ENCODE measurements at regions of chr6 and their contacts with region 1.

Region 1: DNA sequence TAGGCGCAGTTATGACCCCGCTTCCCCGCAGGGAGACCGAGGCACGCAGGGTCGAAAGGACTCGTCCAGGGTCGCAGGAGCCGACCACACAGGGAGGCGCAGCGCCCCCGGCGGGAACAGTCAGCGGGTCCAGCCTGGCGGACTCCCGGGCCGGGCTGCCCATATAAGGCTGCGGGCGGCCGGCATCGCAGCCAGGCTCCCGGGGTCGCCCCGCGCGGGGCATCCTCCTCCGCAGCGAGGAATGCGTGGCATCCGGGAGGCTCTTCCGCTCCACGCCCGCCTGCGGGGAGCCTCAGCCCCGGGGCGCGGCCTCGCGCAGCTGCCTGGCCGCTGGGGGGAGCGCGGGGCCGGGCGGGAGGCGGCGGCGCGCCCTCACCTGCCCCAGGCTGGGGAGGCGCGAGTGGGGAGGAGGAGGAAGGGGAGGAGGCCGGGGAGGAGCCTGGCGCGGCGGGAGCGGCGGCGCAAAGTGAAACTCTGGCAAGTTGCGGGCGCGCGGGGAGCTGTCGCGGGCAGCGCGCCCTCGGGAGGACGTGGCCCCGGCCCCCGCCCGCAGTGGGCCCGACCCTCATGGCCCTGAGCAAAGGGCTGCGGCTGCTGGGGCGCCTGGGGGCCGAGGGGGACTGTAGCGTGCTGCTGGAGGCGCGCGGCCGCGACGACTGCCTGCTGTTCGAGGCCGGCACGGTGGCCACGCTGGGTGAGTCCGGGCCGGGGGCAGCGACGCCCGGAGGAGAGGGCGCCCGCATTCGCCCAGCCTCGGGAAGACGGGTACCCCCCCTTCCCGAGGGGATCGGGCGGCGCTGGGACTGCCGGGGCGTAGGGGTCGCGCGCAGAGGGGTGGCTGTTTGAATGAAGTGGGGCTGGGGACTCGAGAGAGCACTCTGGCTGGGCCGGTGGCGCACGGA is at the start of gene SYNJ2:
- DNase-seq: peak; percentile 83
- H3K4me3 Mint-ChIP-seq: peak within 1 kb of the TSS; percentile 88
- H3K27ac Mint-ChIP-seq: peak within 1 kb of the TSS; percentile 80
- H3K4me1 Mint-ChIP-seq: peaks cover 44% of the 10 kb centered on the region
- H3K27me3 Mint-ChIP-seq: peaks cover 10% of the 10 kb centered on the region
- total RNA-seq, gene SYNJ2: 21.5 and 23.6 TPM in 2 replicates

Region 2: DNA sequence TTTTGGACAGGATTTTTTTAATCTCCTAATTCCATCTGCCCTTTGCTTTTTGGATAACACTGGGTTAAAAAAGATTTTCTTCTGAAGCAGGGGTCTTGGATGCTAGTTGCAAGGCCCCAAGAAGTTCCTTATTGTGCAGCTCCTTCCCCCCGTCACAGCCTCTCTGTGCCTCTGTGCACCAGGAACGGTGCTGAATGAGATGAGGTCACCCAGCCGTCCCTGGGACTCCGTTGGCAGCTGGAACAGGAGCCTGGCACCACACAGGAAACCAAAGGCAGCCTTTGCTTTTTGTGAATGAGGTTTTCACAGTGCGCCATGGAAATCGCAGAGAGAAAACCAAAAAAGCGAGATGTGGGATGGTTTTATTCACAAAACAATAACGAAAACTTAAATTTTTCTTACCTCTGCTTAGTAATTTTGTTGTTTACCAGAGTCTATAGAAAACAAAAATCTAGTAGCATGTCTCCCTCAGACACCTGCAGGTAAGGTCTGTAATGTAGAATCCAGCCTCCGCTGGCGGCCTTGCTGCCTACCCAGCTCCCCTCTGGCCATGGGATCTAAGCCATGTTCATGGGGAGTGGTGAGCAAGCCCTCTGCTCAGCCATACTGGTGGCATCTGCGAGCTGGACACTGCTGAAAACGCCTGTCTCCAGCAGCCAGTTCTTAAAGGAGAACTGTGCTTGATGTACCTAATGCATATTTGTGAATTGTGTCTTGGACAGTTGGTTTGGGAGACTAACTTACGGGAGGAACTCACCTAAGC is 40.4 kb before region 1 on chr6:
- intact Hi-C with region 1: no loop called
- DNase-seq: no peak
- H3K4me3 Mint-ChIP-seq: no peak overlapping the region
- H3K27ac Mint-ChIP-seq: no peak overlapping the region
- H3K4me1 Mint-ChIP-seq: peaks cover 38% of the 10 kb centered on the region
- H3K27me3 Mint-ChIP-seq: no peaks in the 10 kb centered on the region

Region 3: DNA sequence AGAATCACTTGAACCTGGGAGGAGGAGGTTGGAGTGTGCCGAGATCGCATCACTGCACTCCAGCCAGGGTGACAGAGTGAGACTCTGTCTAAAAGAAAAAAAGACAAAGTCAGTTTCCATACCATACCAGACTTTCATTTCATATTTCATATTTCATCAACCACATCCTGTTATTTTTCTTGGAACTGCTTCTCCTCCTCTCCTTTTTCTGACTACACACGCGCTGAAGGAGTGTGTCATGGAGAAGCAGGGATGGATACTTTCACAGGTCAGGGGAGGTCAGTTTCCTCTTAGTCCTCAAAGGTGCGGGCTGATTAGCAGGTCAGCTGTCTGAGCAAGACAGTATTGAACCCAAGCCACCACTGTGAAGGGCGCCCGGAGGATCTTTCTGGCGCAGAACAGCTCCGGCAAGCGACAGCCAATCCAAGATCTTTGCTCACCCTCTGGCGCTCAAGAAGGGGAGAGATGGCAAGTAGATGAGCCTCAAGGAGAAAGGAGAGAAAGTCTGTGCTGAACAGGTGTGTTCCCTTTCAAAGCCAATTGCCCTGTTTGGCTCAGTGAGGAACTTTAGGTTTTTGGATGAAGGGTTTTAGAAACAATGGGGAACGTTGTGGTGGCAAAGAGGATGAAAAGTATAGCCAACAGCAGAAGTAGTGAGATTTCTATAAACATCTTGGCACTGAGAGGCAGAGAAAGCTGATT is 18.9 kb before region 1 on chr6:
- intact Hi-C with region 1: loop called (anchors 2 kb)
- DNase-seq: peak; percentile 27
- H3K4me3 Mint-ChIP-seq: peak overlapping the region; percentile 76
- H3K27ac Mint-ChIP-seq: peak overlapping the region; percentile 86
- H3K4me1 Mint-ChIP-seq: peaks cover 24% of the 10 kb centered on the region
- H3K27me3 Mint-ChIP-seq: no peaks in the 10 kb centered on the region

Region 4: DNA sequence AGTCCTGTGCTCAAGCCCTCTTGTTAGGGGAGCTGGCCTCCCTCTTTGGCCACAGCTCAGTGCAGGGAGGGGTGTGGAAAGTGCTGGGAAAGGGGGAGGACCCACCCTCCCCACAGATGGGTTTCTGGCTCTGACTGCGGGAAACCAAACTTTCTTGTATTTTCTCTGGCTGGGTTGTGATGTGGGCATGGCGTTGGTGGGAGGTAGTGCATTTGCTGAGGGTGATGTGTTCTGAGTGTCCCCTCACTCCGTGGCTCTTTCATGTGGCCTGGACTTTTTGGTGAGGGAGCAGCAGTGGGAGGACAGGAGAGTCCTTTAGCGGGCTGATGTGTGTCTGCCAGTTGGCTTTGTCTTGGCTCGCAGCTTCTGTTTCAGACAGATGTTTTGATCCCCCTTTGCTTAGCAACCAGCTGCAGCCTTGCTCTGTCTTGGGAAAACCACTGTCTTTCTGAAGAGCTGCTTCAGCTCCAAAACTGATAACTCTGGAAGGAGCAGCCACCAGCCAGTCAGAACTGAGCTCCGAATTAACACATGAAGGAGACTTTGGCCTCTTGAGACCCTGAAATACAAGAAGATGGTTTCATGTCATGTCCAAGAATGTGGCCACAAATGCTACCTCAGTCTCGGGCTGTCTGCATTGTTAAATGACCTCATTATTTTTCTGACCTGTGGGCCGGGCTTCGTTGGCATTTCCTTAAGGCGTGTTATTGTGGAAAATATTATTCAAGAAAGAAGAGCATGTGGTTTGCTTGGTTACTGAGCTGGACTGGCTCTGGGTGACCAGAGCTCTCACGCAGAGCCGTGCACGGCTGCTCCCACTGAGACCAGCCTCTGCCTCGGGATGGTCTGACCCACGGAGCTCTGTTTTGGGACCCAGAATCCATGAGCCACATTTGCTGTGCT is 21.6 kb after region 1 on chr6:
- intact Hi-C with region 1: loop called (anchors 2 kb)
- DNase-seq: no peak
- H3K4me3 Mint-ChIP-seq: no peak overlapping the region
- H3K27ac Mint-ChIP-seq: peak overlapping the region; percentile 35
- H3K4me1 Mint-ChIP-seq: peaks cover 21% of the 10 kb centered on the region
- H3K27me3 Mint-ChIP-seq: no peaks in the 10 kb centered on the region

Region 5: DNA sequence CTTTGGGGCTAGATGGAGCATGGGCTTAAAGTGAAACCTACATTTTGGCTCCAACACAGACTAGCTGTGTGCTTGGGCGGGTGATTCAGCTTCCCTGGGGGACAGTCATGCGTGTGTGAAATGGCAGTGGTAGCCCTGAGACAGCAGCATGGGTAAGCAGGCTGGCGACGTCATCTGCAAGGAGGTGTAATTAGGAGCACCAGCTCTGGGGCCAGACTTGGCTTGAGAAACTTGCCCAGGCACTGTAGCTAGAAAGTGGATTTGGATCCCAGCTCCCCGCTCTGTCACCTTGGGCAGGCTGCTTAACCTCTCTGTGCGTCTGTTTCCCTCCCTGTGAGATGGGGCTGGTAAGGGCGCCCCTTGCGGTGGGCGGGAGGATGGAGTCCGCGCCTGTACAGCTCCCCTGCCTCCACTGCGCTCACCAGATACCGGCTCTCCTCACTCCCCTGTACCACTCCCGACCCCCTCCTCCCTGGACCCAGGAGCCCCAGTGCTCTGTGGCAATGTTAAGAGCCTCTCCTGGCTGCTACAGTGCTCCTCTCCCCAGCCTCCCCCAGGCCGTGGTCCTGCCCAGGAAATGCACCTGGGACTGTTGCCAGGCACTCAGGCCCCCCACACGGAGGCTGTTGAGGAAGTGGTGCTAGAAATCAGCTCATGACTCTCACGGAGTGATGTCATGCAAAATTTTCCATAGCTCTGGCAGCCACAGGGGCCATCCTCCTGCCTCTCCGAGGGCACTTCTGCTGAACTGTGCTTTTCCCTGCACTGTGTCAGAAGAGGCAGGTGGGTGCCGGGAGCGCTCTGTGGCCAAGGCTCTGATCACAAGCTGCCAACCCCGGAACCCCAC is 44.6 kb after region 1 on chr6:
- intact Hi-C with region 1: loop called (anchors 1 kb)
- DNase-seq: peak; percentile 71
- H3K4me3 Mint-ChIP-seq: peak overlapping the region; percentile 74
- H3K27ac Mint-ChIP-seq: peak overlapping the region; percentile 99
- H3K4me1 Mint-ChIP-seq: peaks cover 28% of the 10 kb centered on the region
- H3K27me3 Mint-ChIP-seq: no peaks in the 10 kb centered on the region

Region 6: DNA sequence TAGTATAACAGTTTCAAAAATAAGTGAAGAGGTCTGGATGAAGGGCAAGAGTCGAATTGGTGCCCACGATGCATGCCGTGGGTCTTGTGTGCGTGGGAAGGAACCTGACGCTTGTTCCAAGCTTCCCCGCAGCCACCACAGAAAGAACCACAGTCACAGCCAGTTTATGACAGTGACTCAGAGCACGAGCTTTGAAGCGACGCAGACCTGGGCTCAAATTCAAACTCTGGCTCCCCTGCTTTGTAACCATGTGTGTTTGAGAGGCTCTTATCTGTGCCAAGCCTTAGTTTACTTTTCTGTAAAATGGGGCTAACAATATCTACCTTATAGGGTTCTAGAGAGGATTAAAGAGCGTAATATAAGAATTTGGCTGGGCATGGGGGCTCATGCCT is 65.5 kb after region 1 on chr6:
- intact Hi-C with region 1: loop called (anchors 5 kb)
- DNase-seq: peak; percentile 40
- H3K4me3 Mint-ChIP-seq: peak overlapping the region; percentile 34
- H3K27ac Mint-ChIP-seq: peak overlapping the region; percentile 84
- H3K4me1 Mint-ChIP-seq: peaks cover 18% of the 10 kb centered on the region
- H3K27me3 Mint-ChIP-seq: no peaks in the 10 kb centered on the region

Region 7: DNA sequence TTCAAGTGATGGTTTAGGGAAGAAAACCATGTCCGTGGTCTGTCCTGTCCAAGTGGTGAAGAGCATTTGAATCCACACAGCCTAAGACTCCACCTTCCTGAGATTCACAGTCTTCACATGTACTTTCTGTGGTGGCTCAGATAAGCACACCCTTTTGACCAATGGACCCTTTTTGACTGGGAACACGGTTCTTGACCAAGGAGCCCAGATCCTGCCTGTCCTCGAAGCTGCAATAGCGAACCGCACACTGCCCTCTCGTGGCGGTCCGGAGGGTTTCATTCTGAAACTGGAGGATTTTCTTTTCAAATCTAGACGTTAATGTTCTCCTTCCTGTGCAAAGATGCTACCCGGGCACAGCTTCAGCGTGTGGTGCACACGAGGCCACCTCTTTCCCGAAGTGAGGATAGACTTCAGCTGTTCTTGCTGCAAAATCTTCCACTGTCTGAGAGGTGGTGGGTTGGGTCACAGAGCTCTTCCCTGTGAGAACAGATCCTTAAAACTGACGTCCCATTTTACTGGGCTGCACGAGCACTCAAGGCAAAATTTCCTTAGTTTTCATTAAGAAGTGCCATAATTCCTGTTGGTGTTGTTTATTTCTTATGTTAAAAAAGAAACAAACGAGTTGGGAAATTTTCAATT is 90.6 kb after region 1 on chr6:
- intact Hi-C with region 1: loop called (anchors 5 kb)
- DNase-seq: peak; percentile 46
- H3K4me3 Mint-ChIP-seq: no peak overlapping the region
- H3K27ac Mint-ChIP-seq: no peak overlapping the region
- H3K4me1 Mint-ChIP-seq: peaks cover 19% of the 10 kb centered on the region
- H3K27me3 Mint-ChIP-seq: no peaks in the 10 kb centered on the region

Region 8: DNA sequence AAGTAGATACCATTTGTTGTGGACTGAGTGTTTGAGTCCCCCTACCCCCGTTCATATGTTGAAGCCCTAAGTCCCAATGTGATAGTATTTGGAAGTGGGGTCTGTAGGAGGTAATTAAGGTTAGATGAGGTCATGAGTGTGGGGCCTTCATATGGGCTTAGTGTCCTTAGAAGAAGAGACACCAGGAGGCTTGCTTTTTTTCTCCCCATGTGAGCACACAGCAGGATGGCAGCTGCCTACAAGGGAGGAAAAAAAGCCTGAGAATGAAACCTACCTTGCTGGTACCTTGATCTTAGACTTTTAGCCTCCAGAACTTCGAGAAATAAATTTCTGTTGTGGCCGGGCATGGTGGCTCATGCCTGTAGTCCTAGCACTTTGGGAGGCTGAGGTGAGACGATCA is 262.7 kb after region 1 on chr6:
- intact Hi-C with region 1: no loop called
- DNase-seq: no peak
- H3K4me3 Mint-ChIP-seq: no peak overlapping the region
- H3K27ac Mint-ChIP-seq: no peak overlapping the region
- H3K4me1 Mint-ChIP-seq: peaks cover 21% of the 10 kb centered on the region
- H3K27me3 Mint-ChIP-seq: no peaks in the 10 kb centered on the region

Region 9: DNA sequence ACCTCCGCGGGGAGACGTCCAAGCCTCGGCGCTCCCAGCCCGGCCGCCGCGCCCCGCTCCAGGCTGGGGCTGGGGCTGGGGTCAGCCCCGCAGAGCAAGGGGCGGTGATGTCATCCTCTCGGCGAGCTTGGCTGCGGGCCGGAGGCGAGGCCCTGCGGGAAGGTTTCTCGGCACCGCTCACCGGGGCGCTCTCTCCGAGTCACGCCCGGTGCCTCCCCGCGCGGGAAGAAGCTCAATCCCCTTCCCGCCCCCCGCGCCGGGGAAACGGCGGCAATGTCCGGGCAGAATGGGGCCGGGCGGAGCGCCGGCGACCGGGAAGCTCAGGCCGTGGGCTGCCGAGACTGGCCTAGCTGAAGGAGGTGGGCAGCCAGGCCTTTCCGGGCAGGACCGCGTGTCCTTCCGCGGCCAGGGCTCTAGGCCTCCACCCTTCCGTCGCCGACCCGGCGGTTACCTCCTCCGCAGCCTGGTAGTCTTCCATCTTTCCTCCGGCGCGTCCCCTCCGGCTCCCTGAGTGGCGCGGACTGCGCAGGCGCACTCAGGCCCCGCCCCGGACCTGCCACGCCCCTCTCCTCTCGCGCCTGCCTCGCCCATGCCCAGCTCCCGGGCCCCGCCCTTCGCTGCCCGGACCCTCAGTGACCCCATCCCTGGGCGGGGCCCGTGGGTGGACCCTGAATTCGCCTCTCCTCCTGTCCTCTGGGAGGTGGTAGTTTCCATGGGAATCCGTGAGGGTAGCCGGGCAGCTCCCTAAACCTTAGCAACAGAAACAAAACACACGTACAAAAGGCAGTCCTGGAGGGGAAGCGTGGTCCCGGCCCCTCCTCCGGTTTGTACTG is 662.8 kb after region 1 on chr6 and contains the start of gene DYNLT1:
- intact Hi-C with region 1: loop called (anchors 5 kb)
- DNase-seq: peak; percentile 88
- H3K4me3 Mint-ChIP-seq: peak within 1 kb of the TSS; percentile 97
- H3K27ac Mint-ChIP-seq: peak within 1 kb of the TSS; percentile 97
- H3K4me1 Mint-ChIP-seq: peaks cover 69% of the 10 kb centered on the region
- H3K27me3 Mint-ChIP-seq: no peaks in the 10 kb centered on the region
- total RNA-seq, gene DYNLT1: 94.4 and 108 TPM in 2 replicates